AG04449 (cell line): ENCODE measurements at regions of chr10 and their contacts with region 1.

Region 1: GRCh38 chr10:112307358-112308124 is 24.3 kb downstream of the TECTB start:
- DNase-seq: peak; percentile 9
- H3K4me3 ChIP-seq: no peak overlapping the region
- CTCF ChIP-seq: peak; percentile 86

Region 2: DNA sequence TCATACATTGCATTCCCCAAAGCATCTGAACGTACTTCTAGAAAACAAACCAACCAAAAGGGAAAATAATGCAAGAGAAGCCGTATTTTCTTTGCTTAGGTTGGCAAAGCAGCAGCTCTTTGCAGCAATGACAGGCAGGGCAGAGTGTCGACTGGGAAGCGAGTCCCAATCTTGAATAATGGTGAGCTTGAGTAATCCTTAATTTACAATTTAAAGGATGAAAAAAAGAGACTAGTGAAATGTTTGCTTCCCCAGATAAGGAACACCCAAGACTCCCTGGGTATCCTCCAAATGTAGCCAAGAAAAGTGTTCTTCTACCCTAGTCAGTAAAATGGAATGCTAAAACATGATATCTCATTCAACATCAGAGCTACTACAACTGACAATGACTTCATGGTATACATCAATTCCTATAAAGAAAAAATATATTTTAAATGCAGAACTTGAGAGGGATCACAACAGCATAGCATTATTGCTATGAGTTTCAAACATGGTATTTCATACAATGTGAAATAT is 156.0 kb before region 1 on chr10:
- CTCF ChIA-PET with region 1: interaction called, 42 read pairs
- POLR2A ChIA-PET with region 1: no interaction called
- DNase-seq: peak; percentile 29
- H3K4me3 ChIP-seq: no peak overlapping the region
- CTCF ChIP-seq: no peak

Region 3: DNA sequence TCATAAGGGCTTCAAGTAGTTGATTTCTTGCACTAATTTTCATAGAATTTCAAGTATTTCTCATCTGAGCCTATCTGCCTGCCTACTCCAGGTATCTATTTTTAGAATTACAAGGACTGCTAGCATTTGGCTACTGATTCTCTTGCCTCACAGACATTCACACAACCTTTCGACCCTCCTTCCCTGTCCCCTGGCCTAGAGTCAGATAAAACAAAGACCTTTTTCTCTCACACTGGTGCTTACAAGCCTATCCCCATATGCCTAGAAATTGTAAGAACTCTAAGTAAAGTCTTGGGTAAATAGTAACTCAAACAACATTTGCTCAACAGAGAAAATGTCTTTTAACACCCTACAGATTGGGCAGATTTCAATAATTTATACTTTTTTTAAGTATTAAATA is 130.3 kb before region 1 on chr10:
- CTCF ChIA-PET with region 1: interaction called, 87 read pairs
- POLR2A ChIA-PET with region 1: no interaction called
- DNase-seq: peak; percentile 19
- H3K4me3 ChIP-seq: no peak overlapping the region
- CTCF ChIP-seq: no peak

Region 4: GRCh38 chr10:112213098-112213823 is 94.3 kb before region 1 on chr10:
- CTCF ChIA-PET with region 1: interaction called, 16 read pairs
- POLR2A ChIA-PET with region 1: no interaction called
- DNase-seq: no peak
- H3K4me3 ChIP-seq: no peak overlapping the region
- CTCF ChIP-seq: no peak

Region 5: GRCh38 chr10:112327678-112328077 is 20.1 kb after region 1 on chr10:
- CTCF ChIA-PET with region 1: interaction called, 13 read pairs
- POLR2A ChIA-PET with region 1: no interaction called
- DNase-seq: no peak
- H3K4me3 ChIP-seq: no peak overlapping the region
- CTCF ChIP-seq: no peak

Region 6: GRCh38 chr10:112803961-112804401 is 496.4 kb after region 1 on chr10:
- CTCF ChIA-PET with region 1: no interaction called
- POLR2A ChIA-PET with region 1: no interaction called
- DNase-seq: no peak
- H3K4me3 ChIP-seq: no peak overlapping the region
- CTCF ChIP-seq: no peak